IMR-90 (cell line): ENCODE measurements at regions of chr2 and their contacts with region 1.

Region 1: DNA sequence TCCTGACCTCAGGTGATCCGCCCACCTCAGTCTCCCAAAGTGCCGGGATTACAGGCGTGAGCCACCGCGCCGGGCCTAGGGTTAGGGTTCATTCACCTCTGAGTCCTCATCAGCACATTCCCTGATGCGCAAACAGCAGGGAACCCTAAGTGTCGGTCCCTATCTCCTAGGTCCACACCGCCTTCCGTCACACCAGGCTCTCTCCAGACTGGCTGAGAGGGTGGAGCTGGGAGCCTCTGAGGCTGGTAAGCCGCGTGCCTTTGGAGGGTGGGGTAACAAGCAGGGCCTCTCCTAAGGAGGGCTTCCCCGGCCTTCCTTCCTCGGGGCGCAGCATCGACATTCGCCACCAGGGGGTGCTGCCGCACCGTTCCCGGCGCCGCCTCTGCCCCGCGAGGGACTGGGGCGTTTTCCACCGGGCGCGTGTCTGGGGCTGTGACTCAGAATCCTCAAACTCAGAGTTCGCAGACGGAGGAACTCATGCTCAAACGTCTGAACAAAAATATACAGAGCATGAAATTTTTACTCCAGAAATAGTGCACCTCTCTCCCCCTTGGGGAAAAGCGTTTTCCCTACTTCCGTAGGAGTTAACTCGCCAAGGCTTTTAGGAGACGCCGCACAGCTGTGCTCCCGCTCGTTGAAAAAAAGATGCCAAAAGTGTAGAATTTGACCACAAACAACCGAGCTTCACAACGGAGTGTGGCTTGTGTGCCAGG is 63.9 kb upstream of the ASAP2 start:
- DNase-seq: peak; percentile 92
- ATAC-seq: peak; percentile 93
- H3K4me3 ChIP-seq: peak overlapping the region; percentile 4; the same call in 1 of the 2 replicates
- H3K27ac ChIP-seq: peak overlapping the region; percentile 51
- H3K4me1 ChIP-seq: peaks cover 21% of the 10 kb centered on the region
- H3K27me3 ChIP-seq: no peaks in the 10 kb centered on the region
- CTCF ChIP-seq: peak; percentile 98
- POLR2A ChIP-seq: peak; percentile 55; the same call in 1 of the 2 replicates
- RAD21 ChIP-seq: peak; percentile 100

Region 2: DNA sequence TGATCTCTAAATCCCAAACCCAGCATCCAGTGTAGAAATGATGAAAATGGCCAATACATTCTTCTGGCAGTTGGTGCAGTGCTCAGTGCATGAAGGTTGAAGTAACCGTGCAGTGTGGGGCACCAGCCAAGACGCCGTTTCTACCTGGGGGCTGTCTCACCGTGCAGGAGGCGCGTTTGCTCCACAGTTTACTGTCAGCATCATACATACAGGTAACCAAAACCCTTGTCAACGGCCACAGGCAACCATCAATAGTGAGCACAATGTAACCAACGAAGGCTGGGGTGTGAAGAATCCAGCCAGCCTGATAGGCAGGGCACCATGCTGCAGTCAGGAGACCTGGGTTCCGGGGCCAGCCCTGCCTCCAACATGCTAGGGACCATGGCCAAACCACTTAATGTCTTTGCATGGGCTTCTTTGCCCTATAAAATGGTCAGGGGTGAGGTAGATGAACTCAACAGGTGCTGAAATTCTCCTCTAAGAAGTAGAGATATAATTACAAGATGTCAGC is 588.4 kb before region 1 on chr2:
- CTCF ChIA-PET with region 1: no interaction called
- POLR2A ChIA-PET with region 1: no interaction called
- dilution Hi-C with region 1: no loop called
- in situ Hi-C with region 1: no loop called
- intact Hi-C with region 1: no loop called
- DNase-seq: no peak
- ATAC-seq: no peak
- H3K4me3 ChIP-seq: no peak overlapping the region
- H3K27ac ChIP-seq: no peak overlapping the region
- H3K4me1 ChIP-seq: no peaks in the 10 kb centered on the region
- H3K27me3 ChIP-seq: no peaks in the 10 kb centered on the region
- CTCF ChIP-seq: no peak
- POLR2A ChIP-seq: no peak
- RAD21 ChIP-seq: no peak

Region 3: DNA sequence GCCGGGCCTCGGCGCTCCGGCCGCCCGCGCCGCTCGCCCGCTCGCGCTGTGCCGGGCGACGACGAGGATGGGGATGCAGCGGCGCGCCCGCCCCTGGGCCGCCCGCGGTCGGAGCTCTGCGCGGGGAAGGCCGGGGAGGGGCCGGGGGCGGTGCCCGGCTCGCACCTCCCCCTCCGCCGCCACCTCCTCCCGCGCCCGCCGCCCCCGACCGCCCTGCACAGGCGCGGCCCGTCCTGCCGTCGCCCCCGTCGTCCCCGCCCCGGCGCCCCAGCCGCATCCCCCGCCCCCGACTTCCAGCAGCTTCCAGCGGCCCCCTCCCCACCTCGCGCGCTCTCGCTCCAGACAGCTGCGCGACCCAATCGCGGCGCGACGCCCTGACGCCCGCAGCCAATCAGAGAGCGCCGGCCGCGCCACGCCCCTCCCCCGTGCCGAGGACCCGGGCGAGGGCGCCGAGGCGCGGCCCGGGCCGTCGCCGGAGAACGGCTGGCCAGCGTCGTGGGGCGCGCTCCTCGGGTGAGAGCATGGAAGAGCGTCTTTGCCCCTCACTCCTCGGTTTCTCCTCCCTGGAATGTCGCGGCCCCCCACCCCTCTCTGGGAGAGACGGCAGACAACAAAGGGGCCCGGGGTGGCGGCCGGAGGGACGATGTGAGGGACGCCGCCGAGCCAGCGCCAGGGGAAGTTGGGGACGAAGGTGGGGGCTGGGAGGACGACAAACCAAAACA is 138.9 kb before region 1 on chr2 and contains the start of gene MBOAT2:
- CTCF ChIA-PET with region 1: no interaction called
- POLR2A ChIA-PET with region 1: no interaction called
- dilution Hi-C with region 1: no loop called
- in situ Hi-C with region 1: no loop called
- intact Hi-C with region 1: loop called (anchors 2 kb)
- DNase-seq: peak; percentile 89
- ATAC-seq: peak; percentile 93
- H3K4me3 ChIP-seq: peak within 1 kb of the TSS; percentile 88
- H3K27ac ChIP-seq: peak within 1 kb of the TSS; percentile 96
- H3K4me1 ChIP-seq: peaks cover 6% of the 10 kb centered on the region
- H3K27me3 ChIP-seq: no peaks in the 10 kb centered on the region
- CTCF ChIP-seq: no peak
- POLR2A ChIP-seq: peak; percentile 86
- RAD21 ChIP-seq: no peak
- total RNA-seq, gene MBOAT2: 91.7 and 102 TPM in 2 replicates

Region 4: DNA sequence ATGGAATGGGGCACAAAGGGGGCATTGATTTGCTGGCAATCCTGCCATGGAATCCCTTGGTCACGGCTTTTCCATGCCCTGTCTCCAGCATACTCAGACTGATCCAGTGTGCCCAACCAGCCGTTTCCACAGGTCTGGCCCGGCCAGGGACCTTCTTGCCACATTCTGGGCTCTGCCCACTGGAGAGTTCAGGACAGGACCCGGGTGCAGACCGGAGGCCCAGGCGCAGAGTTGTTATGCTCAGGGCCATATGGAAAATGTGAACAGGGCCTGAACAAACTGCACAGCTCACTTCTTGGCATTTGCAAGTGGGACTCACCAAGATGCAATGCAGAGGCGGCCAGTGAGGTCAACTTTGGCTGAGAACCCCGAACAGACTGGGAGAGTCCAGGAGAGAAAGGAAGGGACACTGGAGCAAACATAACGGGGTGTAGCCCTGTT is 48.4 kb after region 1 on chr2:
- CTCF ChIA-PET with region 1: no interaction called
- POLR2A ChIA-PET with region 1: no interaction called
- dilution Hi-C with region 1: no loop called
- in situ Hi-C with region 1: no loop called
- intact Hi-C with region 1: loop called (anchors 5 kb)
- DNase-seq: peak; percentile 95
- ATAC-seq: peak; percentile 93
- H3K4me3 ChIP-seq: no peak overlapping the region
- H3K27ac ChIP-seq: peak overlapping the region; percentile 67; the same call in 1 of the 2 replicates
- H3K4me1 ChIP-seq: peaks cover 14% of the 10 kb centered on the region
- H3K27me3 ChIP-seq: no peaks in the 10 kb centered on the region
- CTCF ChIP-seq: no peak
- POLR2A ChIP-seq: no peak
- RAD21 ChIP-seq: peak; percentile 12; the same call in 1 of the 2 replicates

Region 5: DNA sequence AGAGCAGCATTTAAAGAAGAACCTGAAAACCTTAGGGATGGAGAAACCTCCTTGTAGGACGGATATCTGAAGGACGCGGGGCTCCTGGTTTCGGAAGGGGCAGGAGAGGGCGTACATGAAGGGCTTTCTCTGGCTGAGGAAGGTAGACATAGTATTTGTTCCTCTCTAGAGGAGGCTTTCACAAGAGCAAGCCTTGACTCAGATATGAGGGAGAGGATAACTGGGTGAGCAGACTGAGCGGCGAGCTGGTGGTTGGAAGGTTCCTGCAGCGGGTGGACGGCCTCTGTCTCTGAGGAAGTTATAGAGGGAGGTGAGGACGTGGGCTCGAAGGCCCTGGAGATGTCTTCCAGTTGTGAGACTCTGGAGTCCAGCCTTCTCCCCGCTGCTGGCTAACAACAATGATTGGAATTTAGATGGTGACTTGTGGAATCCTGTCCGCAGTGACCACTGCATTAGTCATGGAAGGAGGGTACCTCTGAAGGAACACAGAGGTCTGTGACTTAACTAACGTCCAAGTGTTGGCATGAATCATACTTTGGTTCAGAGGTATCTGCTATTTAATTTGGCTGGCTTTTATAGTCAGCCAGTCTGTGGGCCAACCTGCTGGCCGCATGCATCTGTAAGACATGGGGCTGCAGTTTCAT is 144.8 kb after region 1 on chr2:
- CTCF ChIA-PET with region 1: no interaction called
- POLR2A ChIA-PET with region 1: no interaction called
- dilution Hi-C with region 1: no loop called
- in situ Hi-C with region 1: no loop called
- intact Hi-C with region 1: loop called (anchors 5 kb)
- DNase-seq: peak; percentile 99
- ATAC-seq: peak; percentile 83
- H3K4me3 ChIP-seq: no peak overlapping the region
- H3K27ac ChIP-seq: peak overlapping the region; percentile 94
- H3K4me1 ChIP-seq: peaks cover 19% of the 10 kb centered on the region
- H3K27me3 ChIP-seq: no peaks in the 10 kb centered on the region
- CTCF ChIP-seq: peak; percentile 24; the same call in 1 of the 2 replicates
- POLR2A ChIP-seq: no peak
- RAD21 ChIP-seq: no peak

Region 6: DNA sequence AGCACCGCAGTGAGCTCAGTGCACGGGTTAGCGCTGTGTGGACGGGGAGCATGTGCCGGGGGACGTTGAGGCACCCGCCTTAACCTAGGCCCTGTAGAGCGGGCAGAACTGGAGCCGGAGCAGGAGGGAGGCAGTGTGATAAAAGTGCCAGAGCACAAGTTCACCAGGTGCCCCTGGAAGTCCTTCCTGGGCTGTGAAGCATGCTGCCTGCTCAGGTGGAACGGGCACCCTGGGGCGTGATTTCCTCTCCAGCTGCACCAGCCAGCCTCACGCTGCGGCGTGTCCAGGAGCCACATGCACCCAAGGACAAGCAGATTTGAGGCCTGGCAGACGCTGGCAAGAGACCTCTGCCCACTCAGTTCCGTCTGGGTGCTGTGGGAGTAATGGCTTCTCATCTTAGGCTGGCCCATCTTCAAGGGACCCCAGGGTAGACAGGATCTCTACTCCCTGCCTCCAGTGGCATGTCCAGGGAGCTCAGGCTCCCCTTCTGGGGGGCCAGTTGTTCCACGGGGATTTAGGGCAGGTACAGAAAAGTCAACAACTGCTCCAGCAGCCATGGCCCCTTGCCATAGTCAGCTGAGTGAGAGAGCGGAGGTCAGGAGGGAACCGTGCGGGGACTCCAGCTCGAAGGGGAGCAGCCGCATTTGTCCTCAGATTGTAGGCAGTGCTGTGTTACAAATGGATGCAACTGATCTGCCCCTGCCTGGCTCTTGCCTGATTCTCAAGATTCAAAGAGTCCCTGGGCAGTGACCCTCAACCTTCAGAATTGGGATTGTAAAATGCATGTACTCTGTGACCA is 230.6 kb after region 1 on chr2:
- CTCF ChIA-PET with region 1: interaction called, 10 read pairs
- POLR2A ChIA-PET with region 1: no interaction called
- dilution Hi-C with region 1: no loop called
- in situ Hi-C with region 1: loop called (anchors 10 kb)
- intact Hi-C with region 1: loop called (anchors 1 kb)
- DNase-seq: no peak
- ATAC-seq: no peak
- H3K4me3 ChIP-seq: no peak overlapping the region
- H3K27ac ChIP-seq: no peak overlapping the region
- H3K4me1 ChIP-seq: peaks cover 19% of the 10 kb centered on the region
- H3K27me3 ChIP-seq: no peaks in the 10 kb centered on the region
- CTCF ChIP-seq: no peak
- POLR2A ChIP-seq: no peak
- RAD21 ChIP-seq: no peak

Region 7: DNA sequence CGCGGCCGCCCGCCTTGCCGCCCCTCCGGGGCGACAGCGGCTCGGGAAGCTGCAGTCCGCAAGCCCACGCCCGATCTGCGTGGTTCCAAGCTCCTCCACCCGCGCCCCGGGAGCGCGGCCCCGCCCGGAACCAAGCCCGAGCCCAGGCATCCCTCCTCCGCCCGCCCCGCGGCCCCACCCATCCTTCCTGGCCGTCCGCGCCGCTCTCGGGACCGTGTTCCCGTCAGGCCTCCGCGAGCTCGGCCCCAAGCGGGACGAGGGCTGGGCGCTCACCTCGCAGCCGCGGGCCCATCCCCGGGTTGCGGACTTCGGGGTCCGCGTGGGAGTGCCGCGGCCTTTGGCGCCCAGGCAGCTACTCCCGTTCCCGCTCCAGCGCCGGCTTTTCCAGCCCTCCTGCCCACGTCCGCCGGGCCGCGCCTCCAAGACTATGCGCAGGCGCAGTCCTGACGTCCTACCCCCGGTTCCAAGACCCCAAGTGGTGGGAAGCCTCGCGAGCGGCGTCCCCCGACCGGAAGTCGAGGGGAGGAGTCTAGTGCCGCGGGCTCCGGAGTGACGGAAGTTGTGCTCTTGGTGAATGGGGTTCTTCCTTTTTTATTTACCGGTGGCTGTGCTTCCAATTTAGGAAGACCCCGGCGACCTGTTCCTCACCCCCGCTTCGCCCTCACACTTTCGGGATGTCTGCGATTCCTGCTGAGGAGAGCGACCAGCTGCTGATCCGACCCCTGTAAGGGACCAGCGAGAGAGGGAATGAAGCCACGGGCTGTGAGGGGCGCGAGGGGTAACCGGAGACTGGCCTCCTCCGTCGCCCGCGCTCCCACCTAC is 280.6 kb after region 1 on chr2 and contains the starts of genes CPSF3 and ITGB1BP1:
- CTCF ChIA-PET with region 1: no interaction called
- POLR2A ChIA-PET with region 1: no interaction called
- dilution Hi-C with region 1: no loop called
- in situ Hi-C with region 1: no loop called
- intact Hi-C with region 1: loop called (anchors 2 kb)
- DNase-seq: peak; percentile 97
- ATAC-seq: peak; percentile 92
- H3K4me3 ChIP-seq: peak within 1 kb of the TSS; percentile 90
- H3K27ac ChIP-seq: peak within 1 kb of the TSS; percentile 95
- H3K4me1 ChIP-seq: peaks cover 12% of the 10 kb centered on the region
- H3K27me3 ChIP-seq: no peaks in the 10 kb centered on the region
- CTCF ChIP-seq: no peak
- POLR2A ChIP-seq: peak; percentile 50
- RAD21 ChIP-seq: 0 out of 2 replicates have a peak, but pooled peaks have one; percentile 4
- total RNA-seq, gene CPSF3: 64.5 and 72.8 TPM in 2 replicates
- total RNA-seq, gene ITGB1BP1: 48.6 and 61.1 TPM in 2 replicates

Region 8: DNA sequence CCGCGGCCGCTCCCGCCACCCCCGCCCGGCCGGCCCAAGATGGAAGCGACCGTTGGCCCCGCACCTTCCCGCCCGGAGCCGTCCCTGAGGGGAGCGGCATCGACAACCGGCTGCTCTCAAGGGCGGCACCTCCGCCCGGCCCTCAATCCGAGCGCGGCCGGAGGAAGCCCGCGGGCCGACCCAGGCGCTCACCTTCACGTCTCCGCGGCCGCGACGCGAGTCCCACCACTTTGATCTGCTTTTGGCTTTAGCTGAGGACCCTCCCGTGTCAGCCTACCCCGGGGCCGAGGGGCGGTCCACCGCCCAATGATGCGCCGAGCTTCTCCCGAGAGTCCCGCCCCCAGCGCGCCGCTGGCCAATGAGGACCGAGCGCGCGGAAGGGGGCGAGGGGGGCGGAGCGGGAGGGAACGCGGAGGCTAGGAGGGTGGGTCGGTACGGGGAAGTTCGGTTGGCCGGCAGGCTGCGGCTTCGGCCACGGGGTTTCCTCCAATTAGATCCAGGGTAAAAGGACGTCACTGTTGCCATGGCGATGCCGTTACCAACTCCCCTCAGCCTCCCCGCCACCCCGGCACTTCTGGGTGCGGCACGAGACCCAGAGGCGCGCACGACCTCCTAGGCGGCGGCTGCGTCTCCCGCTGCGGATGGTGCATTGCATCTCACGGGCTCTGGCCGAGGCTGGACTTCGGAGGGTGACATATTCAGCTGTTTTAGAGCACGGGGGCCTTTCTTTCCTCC is 488.2 kb after region 1 on chr2 and contains the start of gene YWHAQ:
- CTCF ChIA-PET with region 1: no interaction called
- POLR2A ChIA-PET with region 1: no interaction called
- dilution Hi-C with region 1: no loop called
- in situ Hi-C with region 1: no loop called
- intact Hi-C with region 1: loop called (anchors 10 kb)
- DNase-seq: peak; percentile 99
- ATAC-seq: peak; percentile 97
- H3K4me3 ChIP-seq: peak within 1 kb of the TSS; percentile 97
- H3K27ac ChIP-seq: peak within 1 kb of the TSS; percentile 98
- H3K4me1 ChIP-seq: peaks cover 12% of the 10 kb centered on the region
- H3K27me3 ChIP-seq: no peaks in the 10 kb centered on the region
- CTCF ChIP-seq: no peak
- POLR2A ChIP-seq: peak; percentile 99
- RAD21 ChIP-seq: peak; percentile 40
- total RNA-seq, gene YWHAQ: 196 and 249 TPM in 2 replicates